Vagina (tissue), 2 donors: ENCODE measurements at regions of chr1 and their contacts with region 1.

Region 1: DNA sequence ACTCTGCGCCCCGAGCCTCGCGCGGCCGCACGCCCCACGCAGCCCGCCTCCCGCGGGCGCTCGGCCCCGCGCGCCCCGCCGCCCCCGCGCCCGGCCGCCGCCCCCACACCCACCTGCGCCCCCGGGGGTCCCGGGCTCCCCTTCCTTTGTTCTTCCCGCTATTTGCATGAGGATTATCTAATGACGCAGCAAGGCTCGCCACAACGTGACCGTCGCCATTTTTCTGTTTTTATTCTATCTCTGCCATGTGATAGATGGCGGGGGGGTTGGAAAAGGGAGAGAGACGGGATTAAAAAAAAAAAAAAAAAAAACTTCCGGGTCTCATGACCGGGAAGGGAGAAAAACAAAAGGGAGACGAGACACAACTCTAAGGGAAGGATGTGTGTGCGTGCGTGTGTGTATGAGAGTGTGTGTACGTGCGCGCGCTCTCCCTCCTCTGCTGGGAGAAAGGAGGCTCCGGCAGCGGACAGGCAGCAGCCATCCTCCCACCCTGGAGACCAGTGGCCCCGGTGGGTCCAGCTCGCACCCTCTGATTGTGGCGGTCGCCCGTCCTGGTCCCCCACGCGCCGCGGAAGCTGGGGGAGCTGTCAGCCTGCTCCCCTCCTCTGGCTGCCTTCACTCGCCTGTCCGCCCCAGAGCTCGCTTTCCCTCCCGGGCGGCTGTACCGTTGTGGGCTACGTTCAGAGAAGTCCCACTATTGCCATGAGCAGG is 80.4 kb upstream of the AK4 start:
- DNase-seq: peak in 1 of 2 donors; percentile 92
- H3K4me3 ChIP-seq: peak overlapping the region; percentile 70 to 99
- H3K27ac ChIP-seq: peak overlapping the region; percentile 98
- H3K4me1 ChIP-seq: peaks cover 45% of the 10 kb centered on the region
- H3K27me3 ChIP-seq: no peaks in the 10 kb centered on the region
- CTCF ChIP-seq: no peak
- POLR2A ChIP-seq: peak in 1 of 2 donors; percentile 89

Region 2: GRCh38 chr1:65002508-65003315 is 64.9 kb before region 1 on chr1:
- intact Hi-C with region 1: loop called (anchors 2 kb)
- DNase-seq: peak in 1 of 2 donors; percentile 92
- H3K4me3 ChIP-seq: peak overlapping the region; percentile 54 to 56
- H3K27ac ChIP-seq: peak overlapping the region; percentile 92
- H3K4me1 ChIP-seq: peaks cover 9% of the 10 kb centered on the region
- H3K27me3 ChIP-seq: no peaks in the 10 kb centered on the region
- CTCF ChIP-seq: no peak
- POLR2A ChIP-seq: no peak